Mammary epithelial cell (primary cell): ENCODE measurements at regions of chr12 and their contacts with region 1.

Region 1: DNA sequence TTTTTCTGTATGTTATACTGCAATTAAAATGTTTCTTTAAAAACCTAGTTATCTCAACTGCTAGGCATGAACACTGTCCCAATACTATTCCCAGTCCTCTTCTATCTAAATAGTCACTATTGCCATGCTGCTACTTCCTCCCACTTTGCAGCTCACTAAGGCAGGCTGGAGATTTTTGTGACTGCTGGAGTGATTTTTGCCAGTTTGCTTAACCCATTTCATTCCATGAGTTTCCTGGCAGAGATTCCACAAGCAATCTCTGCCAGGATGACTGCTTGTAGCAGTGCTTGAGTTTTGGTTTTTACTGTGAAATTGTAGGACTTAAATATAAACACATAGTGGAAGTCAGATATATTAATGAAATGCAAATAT is 80.8 kb downstream of the BHLHE41 start:
- DNase-seq: no peak
- H3K4me3 ChIP-seq: no peak overlapping the region
- H3K27ac ChIP-seq: no peak overlapping the region
- H3K4me1 ChIP-seq: no peaks in the 10 kb centered on the region
- H3K27me3 ChIP-seq: no peaks in the 10 kb centered on the region
- CTCF ChIP-seq: no peak

Region 2: DNA sequence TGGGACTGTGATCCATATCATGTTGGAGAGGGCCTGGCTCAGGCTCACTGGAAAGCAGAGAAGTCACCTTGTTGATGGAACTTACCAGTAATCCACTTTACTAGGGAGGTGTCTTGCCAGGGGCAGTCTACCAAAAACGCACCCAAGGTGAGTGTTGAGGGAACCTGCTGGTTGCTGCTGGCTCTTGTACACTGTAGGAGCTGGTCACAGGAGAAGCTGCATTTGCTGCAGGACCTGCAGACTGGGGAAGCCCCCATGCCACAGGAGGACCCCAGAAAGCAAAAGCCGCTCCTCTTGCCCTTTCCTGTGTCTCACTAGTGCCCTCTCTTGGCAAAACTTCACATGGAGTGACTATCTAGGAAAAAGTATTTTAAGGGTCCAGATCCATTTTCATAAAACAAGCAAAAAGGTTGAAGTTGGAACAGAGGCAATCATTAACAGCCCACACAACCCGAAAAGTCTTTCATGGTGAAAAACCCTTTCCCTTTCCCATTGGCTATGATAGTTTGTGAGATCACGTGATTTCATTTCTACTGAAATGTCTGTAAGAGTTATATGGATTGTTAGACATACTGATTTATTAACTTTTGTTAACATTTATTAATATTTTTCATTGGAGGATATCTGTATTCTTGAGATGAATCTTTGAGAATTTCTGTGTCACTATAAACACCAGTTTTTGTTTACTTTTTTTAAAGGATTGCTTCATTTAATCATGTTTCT is 26.4 kb before region 1 on chr12:
- CTCF ChIA-PET with region 1: no interaction called
- dilution Hi-C with region 1: no loop called
- in situ Hi-C with region 1: no loop called
- intact Hi-C with region 1: loop called (anchors 2 kb)
- DNase-seq: peak; percentile 26
- H3K4me3 ChIP-seq: no peak overlapping the region
- H3K27ac ChIP-seq: no peak overlapping the region
- H3K4me1 ChIP-seq: peaks cover 2% of the 10 kb centered on the region
- H3K27me3 ChIP-seq: no peaks in the 10 kb centered on the region
- CTCF ChIP-seq: peak; percentile 55 to 68